ENCODE measurements at regions of chr3 and their contacts with region 1.

Region 1: GRCh38 chr3:37466660-37467359 is 292.4 kb upstream of the LRRFIP2 start:
- DNase-seq: no peak
- ATAC-seq: no peak
- H3K4me3 ChIP-seq: no peak overlapping the region
- H3K27ac ChIP-seq: no peak overlapping the region
- H3K4me1 ChIP-seq: no peaks in the 10 kb centered on the region
- H3K27me3 ChIP-seq: peaks cover 82% of the 10 kb centered on the region
- CTCF ChIP-seq: no peak

Region 2: GRCh38 chr3:37955918-37956707 is 489.3 kb after region 1 on chr3:
- CTCF ChIA-PET with region 1: no interaction called
- POLR2A ChIA-PET with region 1: interaction called, 11 read pairs
- intact Hi-C with region 1: no loop called
- DNase-seq: no peak
- ATAC-seq: no peak
- H3K4me3 ChIP-seq: no peak overlapping the region
- H3K27ac ChIP-seq: no peak overlapping the region
- H3K4me1 ChIP-seq: no peaks in the 10 kb centered on the region
- H3K27me3 ChIP-seq: no peaks in the 10 kb centered on the region
- CTCF ChIP-seq: no peak

Measured in PC-3 (cell line).